GM12878 (cell line): ENCODE measurements at regions of chr14 and their contacts with region 1.

Region 1: GRCh38 chr14:51248016-51248987 is 8.3 kb downstream of the TMX1 start:
- DNase-seq: peak; percentile 40
- ATAC-seq: peak; percentile 90
- H3K4me3 ChIP-seq: peak overlapping the region; percentile 35; the same call in 1 of the 2 replicates
- H3K27ac ChIP-seq: peak overlapping the region; percentile 56; the same call in 1 of the 2 replicates
- H3K4me1 ChIP-seq: peaks cover 18% of the 10 kb centered on the region
- H3K27me3 ChIP-seq: no peaks in the 10 kb centered on the region
- CTCF ChIP-seq: no peak
- EP300 ChIP-seq: peak in 1 of 2 experiments; percentile 68; a peak in 2 of 4 replicates
- POLR2A ChIP-seq: no peak
- RAD21 ChIP-seq: no peak

Region 2: GRCh38 chr14:50667996-50668825 is 580.1 kb before region 1 on chr14 and contains the start of gene SAV1:
- CTCF ChIA-PET with region 1: no interaction called
- POLR2A ChIA-PET with region 1: no interaction called
- RAD21 ChIA-PET with region 1: interaction called, 3 read pairs
- SMC1A ChIA-PET with region 1: no interaction called
- in situ Hi-C with region 1: no loop called
- intact Hi-C with region 1: loop called (anchors 5 kb)
- DNase-seq: no peak
- ATAC-seq: peak; percentile 78
- H3K4me3 ChIP-seq: peak within 1 kb of the TSS; percentile 90
- H3K27ac ChIP-seq: peak within 1 kb of the TSS; percentile 30
- H3K4me1 ChIP-seq: no peaks in the 10 kb centered on the region
- H3K27me3 ChIP-seq: no peaks in the 10 kb centered on the region
- CTCF ChIP-seq: no peak
- EP300 ChIP-seq: no peak
- POLR2A ChIP-seq: peak; percentile 84
- RAD21 ChIP-seq: peak; percentile 11; the same call in 1 of the 2 replicates
- polyA plus RNA-seq, gene SAV1: 10.1 to 15.1 TPM